PC-9 (cell line): ENCODE measurements at regions of chrX and their contacts with region 1.

Region 1: GRCh38 chrX:41441934-41442823 is 5.0 kb upstream of the NYX start:
- DNase-seq: peak; percentile 80 to 87
- H3K4me3 ChIP-seq: peak overlapping the region; percentile 36; the same call in 1 of the 2 replicates
- H3K27ac ChIP-seq: peak overlapping the region; percentile 65
- H3K4me1 ChIP-seq: no peaks in the 10 kb centered on the region
- H3K27me3 ChIP-seq: no peaks in the 10 kb centered on the region
- CTCF ChIP-seq: peak; percentile 62

Region 2: GRCh38 chrX:41275661-41276609 is 166.2 kb before region 1 on chrX:
- CTCF ChIA-PET with region 1: no interaction called
- POLR2A ChIA-PET with region 1: no interaction called
- intact Hi-C with region 1: loop called (anchors 1 kb)
- DNase-seq: peak in 1 of 2 experiments; percentile 41
- H3K4me3 ChIP-seq: peak overlapping the region; percentile 50; the same call in 1 of the 2 replicates
- H3K27ac ChIP-seq: no peak overlapping the region
- H3K4me1 ChIP-seq: no peaks in the 10 kb centered on the region
- H3K27me3 ChIP-seq: no peaks in the 10 kb centered on the region
- CTCF ChIP-seq: peak; percentile 44

Region 3: GRCh38 chrX:41350976-41351569 is 91.1 kb before region 1 on chrX:
- CTCF ChIA-PET with region 1: no interaction called
- POLR2A ChIA-PET with region 1: no interaction called
- intact Hi-C with region 1: loop called (anchors 5 kb)
- DNase-seq: no peak
- H3K4me3 ChIP-seq: no peak overlapping the region
- H3K27ac ChIP-seq: 0 out of 2 replicates have a peak overlapping the region, but pooled peaks have one; percentile 26
- H3K4me1 ChIP-seq: peaks cover 4% of the 10 kb centered on the region; the same call in 1 of the 2 replicates
- H3K27me3 ChIP-seq: no peaks in the 10 kb centered on the region
- CTCF ChIP-seq: no peak

Region 4: DNA sequence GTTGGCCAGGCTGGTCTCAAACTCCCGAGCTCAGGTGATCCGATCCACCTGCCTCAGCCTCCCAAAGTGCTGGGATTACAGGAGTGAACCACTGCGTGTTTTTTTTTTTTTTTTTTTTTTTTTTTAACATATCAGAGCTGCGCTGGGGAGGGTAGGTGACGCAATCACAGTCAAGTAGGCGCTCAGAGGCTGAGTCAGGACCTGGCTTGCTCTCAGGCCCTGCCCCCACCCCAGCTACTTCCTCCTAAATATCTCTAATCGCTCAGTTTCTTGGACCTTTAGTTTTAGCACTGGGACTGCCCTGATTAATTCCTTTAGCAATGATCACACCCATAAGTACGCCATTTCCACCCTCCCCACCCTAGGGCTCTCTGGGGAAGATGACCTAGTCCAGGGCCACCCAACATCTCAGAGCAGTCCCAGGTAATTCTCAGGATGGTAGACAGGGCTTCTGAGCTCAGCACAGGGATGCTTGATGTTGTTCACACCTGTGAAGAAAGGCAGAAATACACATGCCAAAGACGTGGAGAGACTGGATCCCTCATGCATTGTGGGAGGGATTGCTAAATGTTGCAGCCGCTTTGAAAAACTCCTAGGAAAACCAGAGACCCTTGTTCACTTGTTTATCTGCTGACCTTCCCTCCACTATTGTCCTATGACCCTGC is 58.0 kb before region 1 on chrX:
- CTCF ChIA-PET with region 1: interaction called, 15 read pairs
- POLR2A ChIA-PET with region 1: no interaction called
- intact Hi-C with region 1: loop called (anchors 2 kb)
- DNase-seq: peak; percentile 43 to 72
- H3K4me3 ChIP-seq: no peak overlapping the region
- H3K27ac ChIP-seq: peak overlapping the region; percentile 88
- H3K4me1 ChIP-seq: peaks cover 18% of the 10 kb centered on the region
- H3K27me3 ChIP-seq: no peaks in the 10 kb centered on the region
- CTCF ChIP-seq: no peak